PC-9 (cell line): ENCODE measurements at regions of chr22 and their contacts with region 1.

Region 1: GRCh38 chr22:41688365-41689211 is at the start of gene SNU13:
- DNase-seq: peak; percentile 91 to 92
- H3K4me3 ChIP-seq: peak within 1 kb of the TSS; percentile 79
- H3K27ac ChIP-seq: peak within 1 kb of the TSS; percentile 74
- H3K4me1 ChIP-seq: peaks cover 29% of the 10 kb centered on the region
- H3K27me3 ChIP-seq: no peaks in the 10 kb centered on the region
- CTCF ChIP-seq: no peak; the same call in 1 of the 2 replicates
- total RNA-seq, gene SNU13: 197 and 229 TPM in 2 replicates

Region 2: GRCh38 chr22:41048791-41049717 is 639.5 kb before region 1 on chr22:
- CTCF ChIA-PET with region 1: no interaction called
- POLR2A ChIA-PET with region 1: interaction called, 18 read pairs
- intact Hi-C with region 1: no loop called
- DNase-seq: peak; percentile 73 to 85
- H3K4me3 ChIP-seq: no peak overlapping the region; the same call in 1 of the 2 replicates
- H3K27ac ChIP-seq: no peak overlapping the region
- H3K4me1 ChIP-seq: peaks cover 25% of the 10 kb centered on the region
- H3K27me3 ChIP-seq: no peaks in the 10 kb centered on the region
- CTCF ChIP-seq: no peak

Region 3: DNA sequence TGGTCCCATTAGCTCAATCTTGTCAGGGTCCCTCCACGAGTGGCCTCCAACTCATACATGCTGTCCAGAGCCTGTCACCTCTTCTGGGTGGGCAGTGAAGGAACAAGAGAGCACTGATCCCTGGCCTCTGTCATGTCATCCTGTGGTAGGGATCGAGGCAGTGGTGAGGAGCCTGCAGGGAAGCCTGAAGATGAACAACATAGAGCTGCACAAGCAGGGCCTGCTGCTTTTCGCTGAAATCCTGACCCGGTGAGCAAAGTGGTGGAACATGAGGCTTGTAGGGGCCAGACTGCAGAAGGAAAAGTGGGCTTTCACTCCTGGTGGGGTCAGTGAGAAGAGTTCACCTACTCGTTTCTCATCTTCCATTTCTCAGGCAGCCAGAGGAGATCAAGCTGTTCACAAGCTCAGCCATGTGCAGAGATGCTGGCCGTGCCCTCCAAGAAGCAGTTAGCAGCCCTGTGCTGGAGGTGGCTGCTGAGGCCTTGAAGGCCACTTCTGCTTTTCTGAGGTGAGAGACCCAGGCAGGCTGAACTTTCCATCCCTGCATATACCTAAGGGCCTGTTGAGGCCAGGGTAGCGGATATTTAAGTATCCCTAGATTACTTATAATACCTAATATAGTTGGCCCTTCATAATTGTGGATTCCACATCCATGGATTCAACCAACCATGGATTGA is 43.6 kb after region 1 on chr22:
- CTCF ChIA-PET with region 1: no interaction called
- POLR2A ChIA-PET with region 1: interaction called, 13 read pairs
- intact Hi-C with region 1: no loop called
- DNase-seq: no peak
- H3K4me3 ChIP-seq: no peak overlapping the region
- H3K27ac ChIP-seq: no peak overlapping the region
- H3K4me1 ChIP-seq: peaks cover 7% of the 10 kb centered on the region; the same call in 1 of the 2 replicates
- H3K27me3 ChIP-seq: no peaks in the 10 kb centered on the region
- CTCF ChIP-seq: no peak

Region 4: GRCh38 chr22:41746567-41747400 is 58.2 kb after region 1 on chr22:
- CTCF ChIA-PET with region 1: no interaction called
- POLR2A ChIA-PET with region 1: no interaction called
- intact Hi-C with region 1: no loop called
- DNase-seq: peak; percentile 75 to 88
- H3K4me3 ChIP-seq: no peak overlapping the region
- H3K27ac ChIP-seq: no peak overlapping the region
- H3K4me1 ChIP-seq: no peaks in the 10 kb centered on the region
- H3K27me3 ChIP-seq: no peaks in the 10 kb centered on the region
- CTCF ChIP-seq: peak; percentile 91